ENCODE measurements at regions of chr7 and their contacts with region 1.

Region 1: GRCh38 chr7:36949711-36950600 is 225.7 kb upstream of the AOAH start:
- DNase-seq: no peak
- ATAC-seq: no peak
- H3K4me3 ChIP-seq: no peak overlapping the region
- H3K4me3 Mint-ChIP-seq: no peak overlapping the region
- H3K27ac ChIP-seq: no peak overlapping the region
- H3K27ac Mint-ChIP-seq: no peak overlapping the region
- H3K4me1 ChIP-seq: no peaks in the 10 kb centered on the region
- H3K4me1 Mint-ChIP-seq: peaks cover 8 to 30% (median 16%) of the 10 kb centered on the region in 3 donors
- H3K27me3 ChIP-seq: no peaks in the 10 kb centered on the region
- H3K27me3 Mint-ChIP-seq: no peaks in the 10 kb centered on the region

Region 2: DNA sequence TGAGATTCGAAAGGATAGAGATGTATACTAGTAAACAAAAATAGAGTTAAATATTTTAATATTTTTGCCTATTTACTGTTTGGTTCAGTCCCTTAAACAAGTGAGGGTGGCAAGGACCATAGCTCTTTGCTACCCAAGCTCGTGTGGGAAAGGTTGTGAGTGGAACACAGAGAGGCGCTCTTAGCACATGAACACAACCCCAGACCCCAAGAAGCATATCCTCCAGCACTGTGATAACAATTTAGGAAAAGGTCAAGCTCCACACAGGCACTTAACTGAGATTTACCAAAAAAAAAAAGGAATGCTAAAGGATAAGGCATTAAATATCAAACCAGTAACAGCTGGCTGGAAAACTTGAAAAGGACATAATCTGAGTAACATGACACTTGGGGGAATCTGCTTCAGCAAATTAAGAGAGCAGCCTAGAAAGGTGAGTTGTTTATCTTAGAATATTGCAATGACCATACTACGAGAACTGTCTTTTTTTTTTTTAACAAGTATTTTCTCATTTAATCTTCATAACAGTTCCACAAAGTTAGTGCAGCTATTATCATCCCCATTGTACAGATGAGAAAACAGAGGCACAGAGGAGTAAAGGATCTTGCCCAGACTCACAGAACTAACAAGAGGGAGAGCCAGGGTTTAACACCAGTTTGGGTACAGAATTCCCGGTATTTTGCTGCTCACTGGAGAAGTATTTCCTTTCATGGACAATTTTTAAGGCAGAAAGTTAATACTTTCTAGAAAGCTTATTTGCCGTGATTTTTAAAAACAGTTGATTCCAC is 77.8 kb after region 1 on chr7:
- CTCF ChIA-PET with region 1: interaction called in 1 of 2 experiments, 10 read pairs
- POLR2A ChIA-PET with region 1: no interaction called
- DNase-seq: no peak
- ATAC-seq: no peak
- H3K4me3 ChIP-seq: no peak overlapping the region
- H3K4me3 Mint-ChIP-seq: no peak overlapping the region
- H3K27ac ChIP-seq: no peak overlapping the region
- H3K27ac Mint-ChIP-seq: no peak overlapping the region
- H3K4me1 ChIP-seq: peaks cover 0 to 3% of the 10 kb centered on the region in 2 experiments
- H3K4me1 Mint-ChIP-seq: peaks cover 27 to 42% (median 42%) of the 10 kb centered on the region in 3 donors
- H3K27me3 ChIP-seq: no peaks in the 10 kb centered on the region
- H3K27me3 Mint-ChIP-seq: no peaks in the 10 kb centered on the region